Right cardiac atrium (tissue), 5 donors: ENCODE measurements at regions of chr18 and their contacts with region 1.

Region 1: DNA sequence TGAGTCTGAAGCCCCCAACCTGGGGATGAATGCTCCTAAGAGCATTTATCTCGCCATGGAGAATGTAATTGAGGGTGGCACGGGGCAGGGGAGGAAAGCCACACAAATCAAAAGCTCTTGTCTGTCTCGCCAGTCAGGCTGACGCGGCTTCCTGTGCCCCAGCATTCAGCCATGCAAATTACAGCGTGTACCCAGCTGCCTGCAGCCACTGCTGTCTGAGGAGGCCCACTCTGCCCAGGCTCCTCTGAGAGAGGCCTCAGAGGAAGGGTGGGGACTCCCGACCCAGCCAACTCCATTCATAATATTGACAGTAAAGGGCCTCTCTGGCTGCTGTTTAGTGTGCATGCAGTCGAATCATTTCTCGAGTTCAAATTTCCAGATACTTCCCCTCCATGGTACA is 22.0 kb downstream of the SMAD7 start:
- DNase-seq: peak; percentile 77 to 90 (median 85)
- ATAC-seq: peak; percentile 72 to 73
- H3K4me3 ChIP-seq: no peak overlapping the region
- H3K27ac ChIP-seq: peak overlapping the region; percentile 87
- H3K4me1 ChIP-seq: peaks cover 75% of the 10 kb centered on the region
- H3K27me3 ChIP-seq: no peaks in the 10 kb centered on the region

Region 2: GRCh38 chr18:48851599-48851960 is 77.2 kb before region 1 on chr18:
- intact Hi-C with region 1: loop called in 1 of 4 experiments (anchors 5 kb)
- DNase-seq: peak; percentile 80 to 92 (median 89)
- ATAC-seq: peak; percentile 76 to 79
- H3K4me3 ChIP-seq: no peak overlapping the region
- H3K27ac ChIP-seq: peak overlapping the region; percentile 88
- H3K4me1 ChIP-seq: peaks cover 28% of the 10 kb centered on the region
- H3K27me3 ChIP-seq: no peaks in the 10 kb centered on the region